Mammary epithelial cell (primary cell): ENCODE measurements at regions of chr12 and their contacts with region 1.

Region 1: DNA sequence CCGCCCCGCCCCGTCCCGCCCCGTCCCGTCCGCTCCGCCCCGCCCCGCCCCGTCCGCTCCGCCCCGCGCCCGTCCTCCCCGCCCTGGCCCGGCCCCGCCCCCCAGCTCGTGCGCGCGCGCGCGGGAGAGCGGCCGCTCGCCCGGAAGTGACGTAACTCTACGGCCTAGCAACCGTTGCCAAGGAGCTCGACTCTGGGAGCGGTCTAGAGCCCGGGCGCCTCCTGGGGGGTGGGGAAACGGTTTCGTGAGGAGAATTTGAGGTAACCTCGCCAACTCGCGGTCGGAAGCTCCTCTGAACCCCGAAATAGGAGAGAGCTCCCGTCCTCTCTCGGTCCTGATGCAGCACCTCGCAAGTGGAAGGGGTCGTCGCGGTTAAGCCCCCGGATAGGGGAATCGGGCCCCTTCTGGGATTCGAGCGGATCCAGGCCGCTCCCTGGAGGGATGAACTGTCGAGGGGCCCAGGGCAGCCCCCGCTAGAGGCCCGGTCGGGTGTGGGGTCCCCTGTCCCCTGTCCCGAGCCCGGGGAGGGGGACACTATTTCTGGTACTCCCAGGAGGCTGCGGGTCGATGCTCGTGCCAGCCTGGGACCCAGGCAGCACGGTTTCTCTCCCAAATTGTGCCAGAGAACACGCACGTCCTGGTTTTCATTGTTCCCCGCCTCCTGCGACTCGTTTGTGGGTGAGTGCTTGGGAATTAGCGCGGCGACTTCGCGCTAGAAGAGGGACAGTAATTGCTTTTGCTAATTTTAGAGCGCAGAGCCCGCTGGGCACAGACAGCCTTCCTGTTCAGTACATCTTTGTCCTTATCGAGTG is at the start of gene IFT81:
- DNase-seq: peak; percentile 91
- H3K4me3 ChIP-seq: peak within 1 kb of the TSS; percentile 82 to 98 (median 89)
- H3K27ac ChIP-seq: peak within 1 kb of the TSS; percentile 99
- H3K4me1 ChIP-seq: no peaks in the 10 kb centered on the region
- H3K27me3 ChIP-seq: no peaks in the 10 kb centered on the region
- CTCF ChIP-seq: peak in 1 of 2 donors; percentile 11
- total RNA-seq, gene IFT81: 8.8 to 11.8 TPM

Region 2: GRCh38 chr12:110199339-110200123 is 75.1 kb after region 1 on chr12:
- CTCF ChIA-PET with region 1: no interaction called
- dilution Hi-C with region 1: loop called (anchors 5 kb)
- in situ Hi-C with region 1: no loop called
- intact Hi-C with region 1: no loop called
- DNase-seq: peak; percentile 5
- H3K4me3 ChIP-seq: no peak overlapping the region
- H3K27ac ChIP-seq: no peak overlapping the region
- H3K4me1 ChIP-seq: peaks cover 7% of the 10 kb centered on the region
- H3K27me3 ChIP-seq: no peaks in the 10 kb centered on the region
- CTCF ChIP-seq: no peak

Region 3: GRCh38 chr12:110379197-110379596 is 254.8 kb after region 1 on chr12:
- CTCF ChIA-PET with region 1: no interaction called
- dilution Hi-C with region 1: no loop called
- in situ Hi-C with region 1: no loop called
- intact Hi-C with region 1: no loop called
- DNase-seq: no peak
- H3K4me3 ChIP-seq: no peak overlapping the region
- H3K27ac ChIP-seq: no peak overlapping the region
- H3K4me1 ChIP-seq: no peaks in the 10 kb centered on the region
- H3K27me3 ChIP-seq: no peaks in the 10 kb centered on the region
- CTCF ChIP-seq: no peak